HEK293 (cell line): ENCODE measurements at regions of chr4 and their contacts with region 1.

Region 1: DNA sequence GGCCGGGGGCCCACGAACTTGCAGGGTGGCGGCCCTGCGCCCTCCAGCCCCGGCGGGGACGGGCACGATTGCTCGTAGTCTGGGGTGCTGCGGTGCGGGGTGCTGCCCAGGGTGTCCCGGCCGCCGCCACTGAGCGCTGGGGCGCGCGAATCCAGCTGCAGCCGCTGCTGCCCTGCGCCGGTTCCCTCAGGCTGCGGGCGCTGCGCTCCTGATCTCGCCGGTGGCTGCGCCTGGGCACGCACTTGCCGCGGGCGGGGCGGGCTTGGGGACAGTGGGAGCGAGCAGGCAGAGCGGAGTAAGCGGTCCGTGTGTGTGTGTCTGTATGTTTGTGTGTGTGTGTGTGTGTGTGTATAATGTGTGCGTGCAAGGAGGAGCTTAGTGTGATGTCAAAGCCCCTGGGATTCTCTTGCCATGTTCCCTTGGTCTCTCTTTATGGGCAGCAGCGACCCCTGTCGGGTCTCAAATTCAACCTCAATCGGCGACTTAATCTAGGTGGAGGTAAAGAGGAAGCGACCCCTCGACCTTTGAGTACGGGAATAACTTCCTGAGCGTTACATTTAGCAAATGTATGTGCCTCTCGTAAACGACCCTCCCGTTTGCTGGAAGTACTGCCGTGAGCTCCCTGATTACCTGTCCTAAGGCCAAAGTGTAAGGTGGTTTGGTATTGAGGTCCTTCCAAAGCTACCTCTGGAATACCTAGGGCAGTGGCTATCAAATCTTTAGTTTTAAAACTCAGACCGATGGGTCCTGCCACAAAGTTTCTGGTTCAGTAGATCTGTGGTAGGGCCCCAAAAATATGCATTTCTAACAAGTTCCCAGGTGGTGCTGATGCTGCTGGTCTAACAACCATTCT is at the start of gene RNF150:
- H3K4me3 ChIP-seq: peak within 1 kb of the TSS; percentile 94
- H3K27ac ChIP-seq: peak within 1 kb of the TSS; percentile 80; the same call in 1 of the 2 replicates
- H3K4me1 ChIP-seq: no peaks in the 10 kb centered on the region
- CTCF ChIP-seq: peak; percentile 92

Region 2: DNA sequence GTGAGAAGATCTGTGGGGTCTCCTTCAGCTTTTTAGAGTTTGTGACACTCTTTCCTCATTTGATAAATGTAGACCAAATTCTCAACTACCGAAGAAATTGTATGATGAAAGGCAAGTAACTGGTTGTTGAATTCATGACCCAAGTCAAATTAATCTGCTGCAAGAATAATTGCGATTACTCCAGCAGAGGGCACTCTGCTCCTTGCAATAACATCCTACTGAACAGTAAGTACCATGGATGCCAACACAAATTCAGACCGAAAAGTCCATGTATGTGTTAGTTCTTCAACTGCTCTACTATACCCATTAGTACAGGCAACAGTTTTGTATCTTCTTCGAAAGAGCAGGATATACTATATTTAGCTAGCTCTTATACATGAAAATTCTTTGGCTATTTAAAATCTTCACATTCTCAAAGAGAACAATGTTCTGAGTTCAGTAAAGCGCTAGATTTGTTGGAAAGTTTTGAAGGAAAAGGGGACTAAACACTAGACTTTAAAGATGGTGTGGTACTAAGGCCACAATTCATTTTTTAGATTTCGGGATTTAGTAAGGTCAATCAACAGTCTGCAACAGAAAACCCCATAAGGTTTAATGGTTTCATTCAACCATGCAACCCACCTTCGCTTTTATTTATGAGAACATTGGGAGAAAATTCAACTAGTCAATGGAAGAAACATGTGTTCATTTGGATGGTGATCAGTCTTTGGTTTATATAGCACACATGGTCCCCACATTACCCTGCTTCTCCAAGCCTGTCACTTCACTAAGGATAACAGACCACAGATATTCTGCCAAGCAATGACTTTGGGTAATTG is 271.8 kb before region 1 on chr4:
- CTCF ChIA-PET with region 1: interaction called, 43 read pairs
- POLR2A ChIA-PET with region 1: interaction called, 9 read pairs
- H3K4me3 ChIP-seq: no peak overlapping the region
- H3K27ac ChIP-seq: no peak overlapping the region
- H3K4me1 ChIP-seq: peaks cover 8% of the 10 kb centered on the region
- CTCF ChIP-seq: peak; percentile 55

Region 3: GRCh38 chr4:140884431-140885058 is 248.8 kb before region 1 on chr4:
- CTCF ChIA-PET with region 1: interaction called, 10 read pairs
- POLR2A ChIA-PET with region 1: interaction called, 6 read pairs
- H3K4me3 ChIP-seq: no peak overlapping the region
- H3K27ac ChIP-seq: no peak overlapping the region
- H3K4me1 ChIP-seq: no peaks in the 10 kb centered on the region
- CTCF ChIP-seq: peak; percentile 71; the same call in 1 of the 2 replicates